ENCODE measurements at regions of chr6 and their contacts with region 1.

Region 1: GRCh38 chr6:22062807-22063408 is 233.9 kb downstream of the PRL start:
- DNase-seq: peak; percentile 69
- ATAC-seq: peak; percentile 81
- H3K4me3 ChIP-seq: no peak overlapping the region
- H3K27ac ChIP-seq: peak overlapping the region; percentile 72
- H3K4me1 ChIP-seq: peaks cover 44% of the 10 kb centered on the region
- H3K27me3 ChIP-seq: no peaks in the 10 kb centered on the region
- CTCF ChIP-seq: no peak
- EP300 ChIP-seq: peak; percentile 73 to 78; a peak in 3 of 4 replicates
- POLR2A ChIP-seq: peak; percentile 58
- RAD21 ChIP-seq: no peak

Region 2: GRCh38 chr6:22036275-22036674 is 26.6 kb before region 1 on chr6:
- CTCF ChIA-PET with region 1: no interaction called
- POLR2A ChIA-PET with region 1: interaction called, 5 read pairs
- RAD21 ChIA-PET with region 1: interaction called, 3 read pairs
- SMC1A ChIA-PET with region 1: interaction called, 10 read pairs
- in situ Hi-C with region 1: no loop called
- intact Hi-C with region 1: no loop called
- DNase-seq: peak; percentile 64
- ATAC-seq: peak; percentile 89
- H3K4me3 ChIP-seq: no peak overlapping the region
- H3K27ac ChIP-seq: no peak overlapping the region
- H3K4me1 ChIP-seq: no peaks in the 10 kb centered on the region; the same call in 1 of the 2 replicates
- H3K27me3 ChIP-seq: no peaks in the 10 kb centered on the region
- CTCF ChIP-seq: no peak
- EP300 ChIP-seq: no peak
- POLR2A ChIP-seq: no peak
- RAD21 ChIP-seq: no peak